ENCODE measurements at regions of chrX and their contacts with region 1.

Region 1: GRCh38 chrX:136694431-136695087 is 46.6 kb downstream of the CD40LG start:
- DNase-seq: no peak
- ATAC-seq: peak; percentile 78
- H3K4me3 Mint-ChIP-seq: peak overlapping the region; percentile 53
- H3K27ac Mint-ChIP-seq: peak overlapping the region; percentile 90
- H3K4me1 Mint-ChIP-seq: peaks cover 45% of the 10 kb centered on the region
- H3K27me3 Mint-ChIP-seq: no peaks in the 10 kb centered on the region
- CTCF ChIP-seq: no peak

Region 2: DNA sequence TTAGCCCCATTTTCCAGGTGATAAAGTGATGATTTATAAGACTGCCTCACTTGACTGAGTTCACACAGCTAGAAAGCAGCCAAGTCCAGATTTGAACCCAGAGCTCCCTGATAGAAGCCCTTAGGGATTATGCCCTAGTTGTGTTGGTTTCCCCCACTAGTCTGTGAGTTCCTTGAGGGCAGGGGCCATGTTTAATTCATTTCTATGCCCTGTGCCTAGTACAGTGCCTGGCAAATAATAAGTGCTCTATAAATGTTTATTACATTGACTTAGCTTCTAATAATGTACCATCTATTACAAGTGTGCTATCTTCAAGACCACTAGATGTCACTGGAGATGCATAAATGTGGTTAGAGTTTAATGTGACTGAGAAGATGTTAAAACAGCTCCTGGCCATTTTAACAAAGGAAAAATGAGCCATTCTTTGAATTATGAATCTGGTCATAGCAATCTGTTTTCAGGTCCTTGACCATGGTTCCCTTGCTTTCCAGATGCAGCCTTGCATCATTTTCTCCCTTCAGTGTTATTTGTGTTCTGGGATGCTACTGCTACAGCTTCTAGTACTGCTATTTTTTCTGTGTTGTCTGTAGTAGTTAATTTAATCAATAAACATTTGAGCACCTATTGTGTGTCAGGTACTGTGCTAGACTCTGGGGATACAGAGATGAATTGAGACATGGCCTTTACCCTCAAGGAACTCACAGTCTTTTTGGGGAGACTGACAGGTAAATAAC is 666.1 kb before region 1 on chrX:
- CTCF ChIA-PET with region 1: interaction called, 11 read pairs
- POLR2A ChIA-PET with region 1: no interaction called
- intact Hi-C with region 1: loop called (anchors 2 kb)
- DNase-seq: no peak
- ATAC-seq: no peak
- H3K4me3 Mint-ChIP-seq: no peak overlapping the region
- H3K27ac Mint-ChIP-seq: no peak overlapping the region
- H3K4me1 Mint-ChIP-seq: no peaks in the 10 kb centered on the region
- H3K27me3 Mint-ChIP-seq: no peaks in the 10 kb centered on the region
- CTCF ChIP-seq: no peak

Region 3: DNA sequence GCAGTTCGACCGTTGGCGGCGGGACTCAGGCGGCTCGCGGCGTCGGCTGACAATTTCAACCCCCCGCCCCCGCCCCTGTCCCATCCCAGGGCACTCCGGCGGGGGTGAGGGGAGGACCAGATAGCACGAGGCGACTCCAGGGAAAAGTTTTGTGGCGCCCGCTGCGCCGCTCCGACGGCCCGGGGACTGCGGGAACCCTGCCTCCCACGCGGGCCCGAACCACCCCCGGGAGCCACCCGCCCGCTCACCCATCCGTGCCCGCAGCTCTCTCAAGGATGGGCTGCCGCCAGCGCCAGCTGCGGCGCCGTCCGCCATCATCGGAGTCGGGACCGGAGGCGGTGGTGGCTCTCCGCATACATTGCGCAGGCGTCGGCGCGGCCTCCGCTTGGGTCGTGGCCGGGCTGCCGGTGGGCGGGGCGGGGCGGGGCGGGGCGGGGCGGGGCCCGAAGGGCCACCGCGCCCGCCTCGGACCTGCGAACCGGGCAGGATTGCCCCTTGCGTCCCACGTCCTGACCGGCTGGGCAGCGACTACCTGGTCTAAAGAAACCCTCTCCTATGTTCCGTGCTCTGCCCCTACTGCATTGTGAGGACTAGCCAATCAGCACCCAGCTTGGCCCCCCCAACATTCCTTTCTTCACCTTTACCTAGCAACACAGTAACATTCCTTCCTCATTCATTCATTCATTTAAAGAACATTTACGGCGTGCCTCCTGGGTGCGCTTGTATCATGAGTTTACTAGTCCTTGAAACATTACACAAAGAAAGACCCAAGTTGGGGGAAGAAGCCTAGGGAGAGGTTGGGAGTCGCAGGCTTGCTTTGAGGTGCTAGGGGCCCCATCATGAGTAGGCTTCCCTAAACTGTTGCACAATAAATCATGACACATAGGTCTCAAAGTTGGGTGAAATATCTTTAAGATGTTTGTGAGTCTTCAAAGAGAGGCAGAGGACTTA is 443.2 kb before region 1 on chrX and contains the start of gene MAP7D3:
- CTCF ChIA-PET with region 1: no interaction called
- POLR2A ChIA-PET with region 1: no interaction called
- intact Hi-C with region 1: loop called (anchors 5 kb)
- DNase-seq: peak; percentile 61
- ATAC-seq: peak; percentile 93
- H3K4me3 Mint-ChIP-seq: peak within 1 kb of the TSS; percentile 86
- H3K27ac Mint-ChIP-seq: peak within 1 kb of the TSS; percentile 81
- H3K4me1 Mint-ChIP-seq: peaks cover 6% of the 10 kb centered on the region
- H3K27me3 Mint-ChIP-seq: no peaks in the 10 kb centered on the region
- CTCF ChIP-seq: no peak
- total RNA-seq, gene MAP7D3: 11.2 and 12.2 TPM in 2 replicates

Region 4: GRCh38 chrX:136496770-136497598 is 197.6 kb before region 1 on chrX and contains the start of gene HTATSF1:
- CTCF ChIA-PET with region 1: no interaction called
- POLR2A ChIA-PET with region 1: interaction called, 6 read pairs
- intact Hi-C with region 1: loop called (anchors 5 kb)
- DNase-seq: peak; percentile 79
- ATAC-seq: peak; percentile 81
- H3K4me3 Mint-ChIP-seq: peak within 1 kb of the TSS; percentile 89
- H3K27ac Mint-ChIP-seq: peak within 1 kb of the TSS; percentile 97
- H3K4me1 Mint-ChIP-seq: peaks cover 22% of the 10 kb centered on the region
- H3K27me3 Mint-ChIP-seq: no peaks in the 10 kb centered on the region
- CTCF ChIP-seq: no peak
- total RNA-seq, gene HTATSF1: 23.9 and 24.5 TPM in 2 replicates

Region 5: GRCh38 chrX:136616987-136617685 is 77.4 kb before region 1 on chrX:
- CTCF ChIA-PET with region 1: interaction called, 7 read pairs
- POLR2A ChIA-PET with region 1: no interaction called
- intact Hi-C with region 1: loop called (anchors 2 kb)
- DNase-seq: no peak
- ATAC-seq: peak; percentile 94
- H3K4me3 Mint-ChIP-seq: no peak overlapping the region
- H3K27ac Mint-ChIP-seq: peak overlapping the region; percentile 53
- H3K4me1 Mint-ChIP-seq: peaks cover 7% of the 10 kb centered on the region
- H3K27me3 Mint-ChIP-seq: no peaks in the 10 kb centered on the region
- CTCF ChIP-seq: no peak

Region 6: DNA sequence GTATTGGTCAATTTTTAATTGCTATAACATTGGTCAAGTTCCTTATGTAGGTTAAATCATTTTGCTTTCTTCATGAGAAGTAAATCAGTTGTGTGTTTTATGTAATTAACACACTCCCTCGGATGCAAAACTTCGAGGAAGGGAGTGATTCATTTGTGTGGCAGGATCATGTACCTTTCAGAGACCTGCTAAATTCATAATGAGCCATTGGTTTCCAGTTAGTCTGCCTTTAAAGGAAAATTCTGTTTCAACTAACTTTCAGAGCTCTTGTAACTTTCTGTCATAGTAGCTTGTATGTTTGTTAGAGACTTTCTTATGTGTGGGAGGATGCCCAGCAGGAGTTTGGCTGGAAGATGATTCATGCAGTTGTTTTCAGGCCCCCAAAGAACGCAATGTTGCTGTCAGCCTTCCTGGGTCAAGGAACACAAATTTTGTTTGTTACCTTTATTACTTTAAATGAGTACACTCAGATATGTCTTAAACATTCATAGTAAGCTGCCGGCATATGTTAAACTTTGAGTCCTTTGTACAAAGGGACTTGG is 267.1 kb after region 1 on chrX:
- CTCF ChIA-PET with region 1: no interaction called
- POLR2A ChIA-PET with region 1: no interaction called
- intact Hi-C with region 1: no loop called
- DNase-seq: no peak
- ATAC-seq: no peak
- H3K4me3 Mint-ChIP-seq: no peak overlapping the region
- H3K27ac Mint-ChIP-seq: no peak overlapping the region
- H3K4me1 Mint-ChIP-seq: peaks cover 4% of the 10 kb centered on the region
- H3K27me3 Mint-ChIP-seq: no peaks in the 10 kb centered on the region
- CTCF ChIP-seq: no peak